SK-N-SH (cell line): ENCODE measurements at regions of chr3 and their contacts with region 1.

Region 1: GRCh38 chr3:197029511-197030167 is at the start of gene MELTF:
- DNase-seq: peak; percentile 99
- H3K4me3 ChIP-seq: peak within 1 kb of the TSS; percentile 63 to 74
- H3K27ac ChIP-seq: peak within 1 kb of the TSS in 1 of 2 experiments; percentile 93; a peak in 3 of 4 replicates
- H3K4me1 ChIP-seq: peaks cover 14 to 25% of the 10 kb centered on the region in 2 experiments; a peak in 3 of 4 replicates
- H3K27me3 ChIP-seq: no peaks in the 10 kb centered on the region
- CTCF ChIP-seq: peak; percentile 83
- EP300 ChIP-seq: no peak
- RAD21 ChIP-seq: peak; percentile 50
- polyA plus RNA-seq, gene MELTF: 27.2 and 32.4 TPM in 2 replicates

Region 2: DNA sequence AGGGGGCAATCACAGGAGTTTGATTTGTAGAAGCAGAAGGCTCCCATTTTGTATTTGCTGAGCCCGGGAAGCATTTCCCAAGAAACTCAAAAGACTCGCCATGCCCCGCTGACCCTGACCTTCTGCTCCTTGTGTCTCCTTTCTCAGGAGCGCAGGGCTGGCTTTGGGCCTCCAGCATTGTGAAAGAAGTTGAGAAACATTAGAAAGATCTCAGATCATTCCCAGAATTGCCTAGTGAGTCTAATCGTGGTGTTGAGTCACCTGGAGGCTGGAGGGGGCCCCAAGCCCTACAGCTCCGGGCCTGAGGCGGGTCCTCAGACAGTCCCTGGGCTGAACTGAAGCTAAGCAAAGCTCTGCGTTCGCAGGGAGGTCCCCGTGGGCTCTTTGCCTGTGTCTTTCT is 50.1 kb before region 1 on chr3:
- CTCF ChIA-PET with region 1: interaction called, 15 read pairs
- POLR2A ChIA-PET with region 1: no interaction called
- DNase-seq: no peak
- H3K4me3 ChIP-seq: no peak overlapping the region
- H3K27ac ChIP-seq: no peak overlapping the region
- H3K4me1 ChIP-seq: peaks cover 0 to 2% of the 10 kb centered on the region in 2 experiments; a peak in 1 of 4 replicates
- H3K27me3 ChIP-seq: no peaks in the 10 kb centered on the region
- CTCF ChIP-seq: no peak
- EP300 ChIP-seq: no peak
- RAD21 ChIP-seq: no peak

Region 3: GRCh38 chr3:196989721-196990271 is 39.8 kb before region 1 on chr3:
- CTCF ChIA-PET with region 1: interaction called, 15 read pairs
- POLR2A ChIA-PET with region 1: no interaction called
- DNase-seq: no peak
- H3K4me3 ChIP-seq: no peak overlapping the region
- H3K27ac ChIP-seq: no peak overlapping the region
- H3K4me1 ChIP-seq: peaks cover 0 to 11% of the 10 kb centered on the region in 2 experiments; a peak in 1 of 4 replicates
- H3K27me3 ChIP-seq: no peaks in the 10 kb centered on the region; the same call in 1 of the 2 replicates
- CTCF ChIP-seq: no peak
- EP300 ChIP-seq: no peak
- RAD21 ChIP-seq: no peak

Region 4: GRCh38 chr3:197002701-197003454 is 26.8 kb before region 1 on chr3:
- CTCF ChIA-PET with region 1: interaction called, 79 read pairs
- POLR2A ChIA-PET with region 1: interaction called, 3 read pairs
- DNase-seq: peak; percentile 98
- H3K4me3 ChIP-seq: peak overlapping the region in 1 of 2 experiments; percentile 52; a peak in 2 of 4 replicates
- H3K27ac ChIP-seq: peak overlapping the region in 1 of 2 experiments; percentile 66; a peak in 2 of 4 replicates
- H3K4me1 ChIP-seq: peaks cover 0 to 9% of the 10 kb centered on the region in 2 experiments; a peak in 1 of 4 replicates
- H3K27me3 ChIP-seq: no peaks in the 10 kb centered on the region
- CTCF ChIP-seq: peak; percentile 54
- EP300 ChIP-seq: no peak
- RAD21 ChIP-seq: peak; percentile 59

Region 5: DNA sequence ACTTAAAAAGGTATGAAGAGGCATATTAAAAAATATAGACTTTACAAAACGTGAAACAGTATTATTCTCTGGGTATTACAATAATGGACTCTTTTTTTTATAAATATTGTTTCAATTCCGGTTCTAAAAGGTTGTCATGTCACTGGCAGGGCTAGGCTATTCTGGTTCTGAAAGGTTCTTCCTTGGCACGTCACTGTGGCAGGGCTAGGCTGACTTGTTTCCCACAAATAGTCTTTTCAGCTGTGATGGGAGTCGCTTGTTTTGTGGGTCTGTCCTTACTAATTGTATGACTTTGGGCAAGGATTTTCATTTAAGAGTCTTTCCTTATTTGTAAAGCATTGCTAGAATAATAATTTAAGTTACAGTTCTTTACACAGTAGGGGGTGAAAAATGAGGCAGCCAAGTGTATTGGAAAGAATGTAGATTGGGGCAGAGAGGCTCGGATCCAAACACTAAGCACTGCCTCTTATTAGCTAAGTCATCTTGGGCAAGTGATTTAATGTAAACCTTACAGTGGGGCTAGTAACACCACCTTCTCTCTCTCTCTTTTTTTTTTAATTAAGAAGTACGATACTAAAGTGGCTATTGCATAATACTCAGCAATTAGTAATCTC is 12.3 kb after region 1 on chr3:
- CTCF ChIA-PET with region 1: interaction called, 71 read pairs
- POLR2A ChIA-PET with region 1: interaction called, 4 read pairs
- DNase-seq: no peak
- H3K4me3 ChIP-seq: no peak overlapping the region
- H3K27ac ChIP-seq: no peak overlapping the region
- H3K4me1 ChIP-seq: no peaks in the 10 kb centered on the region
- H3K27me3 ChIP-seq: no peaks in the 10 kb centered on the region
- CTCF ChIP-seq: no peak
- EP300 ChIP-seq: no peak
- RAD21 ChIP-seq: no peak

Region 6: DNA sequence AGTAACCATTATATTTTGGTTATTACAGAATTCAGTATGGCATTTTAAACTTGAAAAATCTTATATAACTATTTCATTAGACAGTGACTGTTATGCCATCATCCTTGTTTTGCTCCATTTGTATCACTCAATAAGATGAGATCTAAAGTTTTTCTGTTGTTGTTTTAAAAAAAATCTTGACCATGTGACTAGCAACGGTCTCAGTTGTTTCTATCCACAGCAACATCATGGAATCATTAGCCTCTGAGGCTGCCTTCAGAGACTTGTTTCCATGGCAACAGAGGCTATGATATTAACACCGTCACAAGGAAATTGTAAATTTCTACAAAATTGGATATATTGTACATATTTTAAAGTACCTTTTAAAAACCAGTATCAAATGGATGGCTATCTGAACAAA is 139.0 kb after region 1 on chr3:
- CTCF ChIA-PET with region 1: interaction called, 10 read pairs
- POLR2A ChIA-PET with region 1: no interaction called
- DNase-seq: peak; percentile 39
- H3K4me3 ChIP-seq: no peak overlapping the region
- H3K27ac ChIP-seq: peak overlapping the region; percentile 46 to 94; a peak in 3 of 4 replicates
- H3K4me1 ChIP-seq: peaks cover 0 to 36% of the 10 kb centered on the region in 2 experiments; a peak in 2 of 4 replicates
- H3K27me3 ChIP-seq: no peaks in the 10 kb centered on the region
- CTCF ChIP-seq: no peak
- EP300 ChIP-seq: no peak
- RAD21 ChIP-seq: no peak